BJ (cell line): ENCODE measurements at regions of chr2 and their contacts with region 1.

Region 1: DNA sequence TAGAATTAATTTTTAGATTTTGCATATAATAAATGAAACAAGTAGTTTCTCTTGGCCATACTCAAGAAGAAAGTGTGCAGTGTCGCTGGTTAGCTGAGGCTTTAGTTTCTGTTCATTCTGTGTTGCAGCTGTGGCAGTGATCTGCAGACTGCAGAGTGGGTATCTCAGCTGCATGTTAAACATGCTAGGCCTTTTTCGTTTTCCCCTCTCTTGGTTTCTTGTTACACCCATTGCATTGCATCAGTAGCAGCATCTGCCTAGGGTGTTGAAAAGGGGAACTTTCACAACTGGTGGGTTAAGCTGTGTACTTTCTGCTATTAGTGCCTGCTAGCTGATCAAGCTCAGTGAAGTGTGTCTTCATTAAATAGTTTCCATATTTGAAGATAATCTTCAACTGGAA is 51.3 kb downstream of the ACSL3 start:
- DNase-seq: no peak
- H3K4me3 ChIP-seq: no peak overlapping the region
- H3K27me3 ChIP-seq: no peaks in the 10 kb centered on the region
- CTCF ChIP-seq: no peak

Region 2: GRCh38 chr2:222572751-222573174 is 339.4 kb before region 1 on chr2:
- CTCF ChIA-PET with region 1: no interaction called
- POLR2A ChIA-PET with region 1: no interaction called
- DNase-seq: no peak
- H3K4me3 ChIP-seq: no peak overlapping the region
- H3K27me3 ChIP-seq: no peaks in the 10 kb centered on the region
- CTCF ChIP-seq: no peak

Region 3: DNA sequence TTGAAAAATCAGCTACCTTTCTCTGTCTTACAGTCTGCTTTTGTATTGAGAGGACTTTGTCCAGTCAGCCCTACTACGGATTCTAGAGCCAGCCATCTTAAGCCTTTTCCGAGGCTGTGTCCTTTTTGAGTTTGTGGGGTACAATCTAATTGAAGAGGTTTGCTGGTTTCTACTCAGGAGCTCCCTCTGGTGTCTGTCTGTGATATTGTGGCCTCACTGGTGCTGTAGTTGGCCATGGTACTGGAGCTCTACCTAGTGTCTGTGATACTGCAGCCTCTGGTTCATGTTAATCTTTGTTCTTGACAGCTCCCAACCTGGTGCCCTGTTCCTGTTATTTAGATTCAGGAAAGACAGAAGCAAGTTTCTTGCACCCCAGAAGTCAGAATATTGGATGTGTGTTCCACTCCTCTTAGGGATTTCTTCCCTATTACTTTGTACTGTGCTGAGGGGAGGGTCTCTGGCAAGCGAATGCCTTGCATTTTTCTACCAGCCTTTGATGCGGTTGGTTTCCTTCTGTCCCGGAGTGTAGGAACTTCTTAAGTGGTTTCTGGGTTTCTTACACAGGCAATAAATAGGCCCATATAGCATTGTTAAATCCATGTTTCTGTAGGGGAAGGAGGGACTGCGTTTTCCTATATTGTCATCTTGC is 27.2 kb after region 1 on chr2:
- CTCF ChIA-PET with region 1: interaction called, 15 read pairs
- POLR2A ChIA-PET with region 1: no interaction called
- DNase-seq: no peak
- H3K4me3 ChIP-seq: no peak overlapping the region
- H3K27me3 ChIP-seq: no peaks in the 10 kb centered on the region
- CTCF ChIP-seq: peak; percentile 84

Region 4: GRCh38 chr2:222959336-222959735 is 47.2 kb after region 1 on chr2:
- CTCF ChIA-PET with region 1: interaction called, 25 read pairs
- POLR2A ChIA-PET with region 1: no interaction called
- DNase-seq: peak; percentile 75
- H3K4me3 ChIP-seq: no peak overlapping the region
- H3K27me3 ChIP-seq: no peaks in the 10 kb centered on the region
- CTCF ChIP-seq: peak; percentile 74

Region 5: DNA sequence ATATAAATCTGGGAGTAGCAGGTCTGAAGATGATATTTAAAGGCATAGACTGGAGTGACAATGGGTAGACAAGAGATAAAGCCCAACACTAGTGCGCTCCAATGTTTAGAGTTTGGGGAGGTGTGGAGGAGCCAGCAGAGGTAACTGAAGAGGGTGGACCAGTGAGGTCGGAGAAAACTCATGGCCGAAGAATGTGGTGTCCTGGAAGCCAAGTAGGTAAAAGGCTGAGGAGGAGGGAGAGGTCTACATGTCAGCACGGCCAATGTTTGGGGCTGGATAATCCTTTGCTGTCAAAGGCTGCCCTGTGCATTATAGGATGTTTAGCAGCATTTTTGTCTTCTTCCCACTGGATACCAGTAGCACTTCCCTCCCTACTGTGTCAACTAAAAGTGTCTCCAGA is 61.1 kb after region 1 on chr2:
- CTCF ChIA-PET with region 1: interaction called, 11 read pairs
- POLR2A ChIA-PET with region 1: no interaction called
- DNase-seq: no peak
- H3K4me3 ChIP-seq: no peak overlapping the region
- H3K27me3 ChIP-seq: no peaks in the 10 kb centered on the region
- CTCF ChIP-seq: no peak

Region 6: DNA sequence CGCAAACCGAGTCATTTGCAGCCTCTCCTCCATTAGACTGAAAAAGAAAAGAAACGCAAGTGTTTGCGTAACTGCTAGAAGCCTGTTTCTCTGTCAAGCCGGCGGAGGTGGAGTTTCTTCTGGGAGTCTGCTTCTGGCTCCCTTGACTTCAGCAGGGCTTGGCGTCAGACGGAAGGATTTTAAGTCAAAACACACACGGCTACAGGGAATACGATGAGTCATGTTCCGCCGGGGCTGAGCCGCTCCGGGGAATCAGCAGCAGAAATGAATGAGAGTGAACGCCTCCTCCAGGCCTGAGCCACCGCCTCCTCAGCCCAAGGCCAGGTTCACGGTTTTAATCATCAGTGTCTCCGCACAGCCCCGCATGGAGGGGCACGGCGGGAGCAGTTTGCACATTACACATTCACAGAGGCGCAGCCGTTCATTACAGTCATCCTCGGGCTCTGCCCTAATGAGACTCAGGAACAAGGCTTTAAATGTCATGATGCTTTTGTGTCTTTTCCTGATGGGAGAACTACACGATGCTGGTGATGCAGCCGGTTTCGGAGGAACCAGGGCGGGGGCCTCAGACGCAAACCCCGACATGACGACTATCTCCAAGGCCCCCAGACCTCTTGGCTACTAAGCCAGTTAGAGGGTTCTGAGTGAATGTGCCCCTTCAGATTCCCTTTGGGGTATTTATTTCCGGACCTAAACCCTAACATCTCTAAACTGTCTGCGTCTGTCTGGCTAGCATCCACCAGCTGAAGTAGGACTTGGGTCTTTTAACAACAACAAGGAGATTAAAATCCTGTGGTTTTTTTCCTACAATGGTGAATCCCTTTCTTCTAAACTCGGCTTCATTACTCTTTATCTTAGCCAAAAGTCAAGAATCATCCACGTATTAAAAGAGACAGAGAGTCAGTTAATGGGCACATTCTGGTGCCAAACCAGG is 701.2 kb after region 1 on chr2:
- CTCF ChIA-PET with region 1: no interaction called
- POLR2A ChIA-PET with region 1: no interaction called
- DNase-seq: peak; percentile 93
- H3K4me3 ChIP-seq: peak overlapping the region; percentile 30
- H3K27me3 ChIP-seq: no peaks in the 10 kb centered on the region
- CTCF ChIP-seq: peak; percentile 32